Activated CD4-positive, alpha-beta T cell treated with anti-CD3 and anti-CD28 coated beads for 36 hours (primary cell): ENCODE measurements at regions of chr17 and their contacts with region 1.

Region 1: DNA sequence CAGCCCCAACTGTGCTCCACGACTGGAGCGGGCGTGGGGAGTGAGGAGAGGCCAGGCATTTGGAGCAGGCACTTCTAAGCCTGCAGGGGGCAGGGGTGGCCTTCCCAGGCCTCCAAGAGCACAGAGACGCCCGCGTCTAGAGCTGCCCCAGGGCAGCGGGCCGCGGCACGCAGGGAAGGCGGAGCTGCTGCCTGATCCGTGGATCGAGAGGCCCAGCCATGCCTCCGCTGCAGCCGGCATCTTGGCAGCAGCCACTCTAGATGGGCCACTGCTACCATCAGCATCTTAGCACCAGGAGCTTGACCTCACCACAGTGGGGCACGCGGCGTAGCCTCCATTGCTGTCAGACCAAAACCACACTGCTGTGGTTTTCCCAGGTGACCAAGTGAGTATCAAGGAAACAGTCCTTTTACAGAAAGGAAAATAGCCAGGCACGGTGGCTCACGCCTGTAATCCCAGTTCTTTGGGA is 20.4 kb upstream of the WDR45B start:
- DNase-seq: peak; percentile 75
- ATAC-seq: peak; percentile 99
- H3K4me3 Mint-ChIP-seq: no peak overlapping the region
- H3K27ac Mint-ChIP-seq: no peak overlapping the region
- H3K4me1 Mint-ChIP-seq: peaks cover 2% of the 10 kb centered on the region
- H3K27me3 Mint-ChIP-seq: no peaks in the 10 kb centered on the region

Region 2: GRCh38 chr17:82611140-82612058 is 57.3 kb before region 1 on chr17:
- CTCF ChIA-PET with region 1: no interaction called
- POLR2A ChIA-PET with region 1: no interaction called
- intact Hi-C with region 1: loop called in 1 of 2 experiments (anchors 5 kb)
- DNase-seq: no peak
- ATAC-seq: peak; percentile 23
- H3K4me3 Mint-ChIP-seq: no peak overlapping the region
- H3K27ac Mint-ChIP-seq: no peak overlapping the region
- H3K4me1 Mint-ChIP-seq: no peaks in the 10 kb centered on the region
- H3K27me3 Mint-ChIP-seq: no peaks in the 10 kb centered on the region

Region 3: GRCh38 chr17:82729479-82730260 is 61.0 kb after region 1 on chr17:
- CTCF ChIA-PET with region 1: no interaction called
- POLR2A ChIA-PET with region 1: no interaction called
- intact Hi-C with region 1: no loop called
- DNase-seq: no peak
- ATAC-seq: no peak
- H3K4me3 Mint-ChIP-seq: no peak overlapping the region
- H3K27ac Mint-ChIP-seq: no peak overlapping the region
- H3K4me1 Mint-ChIP-seq: no peaks in the 10 kb centered on the region
- H3K27me3 Mint-ChIP-seq: no peaks in the 10 kb centered on the region

Region 4: GRCh38 chr17:82767041-82767754 is 98.5 kb after region 1 on chr17:
- CTCF ChIA-PET with region 1: interaction called, 12 read pairs
- POLR2A ChIA-PET with region 1: interaction called, 3 read pairs
- intact Hi-C with region 1: loop called (anchors 1 to 5 kb)
- DNase-seq: peak; percentile 78
- ATAC-seq: peak; percentile 61
- H3K4me3 Mint-ChIP-seq: no peak overlapping the region
- H3K27ac Mint-ChIP-seq: no peak overlapping the region
- H3K4me1 Mint-ChIP-seq: peaks cover 7% of the 10 kb centered on the region
- H3K27me3 Mint-ChIP-seq: no peaks in the 10 kb centered on the region

Region 5: DNA sequence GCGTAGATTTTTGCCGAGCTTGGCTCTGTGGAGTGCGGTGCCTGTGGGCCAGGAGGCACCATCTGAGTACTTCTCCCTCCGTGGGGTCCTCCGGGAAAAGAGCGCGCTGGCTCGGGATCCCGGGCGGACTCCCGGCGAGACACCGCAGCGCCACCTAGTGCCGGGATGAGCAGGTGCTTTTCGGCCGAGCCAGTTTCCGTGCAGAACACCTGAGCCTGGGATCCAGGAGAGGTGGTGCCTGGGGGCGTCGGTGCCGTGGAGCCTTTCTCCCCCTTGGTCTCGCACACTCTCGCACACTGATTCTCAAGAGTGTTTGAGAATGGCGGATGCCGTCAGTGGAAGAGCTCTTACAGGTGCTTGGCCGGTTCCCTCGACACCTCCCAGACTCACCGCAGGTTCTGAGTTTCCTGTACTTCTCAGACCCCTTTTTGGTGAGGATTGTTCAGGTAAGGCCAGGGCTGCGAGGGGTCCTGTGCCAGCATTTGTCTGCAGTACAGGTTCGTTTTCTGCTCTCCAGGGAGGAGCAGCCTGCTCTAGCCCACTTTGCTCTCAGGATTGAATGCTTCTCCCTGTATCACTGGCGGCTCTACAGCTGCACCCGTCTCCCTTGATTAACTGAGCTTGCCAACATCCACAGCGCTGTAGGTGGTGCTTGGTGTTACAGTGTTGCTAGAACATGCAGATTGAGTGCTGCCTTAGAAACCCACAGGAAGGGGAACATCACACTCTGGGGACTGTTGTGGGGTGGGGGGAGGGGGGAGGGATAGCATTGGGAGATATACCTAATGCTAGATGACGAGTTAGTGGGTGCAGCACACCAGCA is 106.5 kb after region 1 on chr17:
- CTCF ChIA-PET with region 1: interaction called, 7 read pairs
- POLR2A ChIA-PET with region 1: interaction called, 3 read pairs
- intact Hi-C with region 1: loop called in 1 of 2 experiments (anchors 2 kb)
- DNase-seq: peak; percentile 74
- ATAC-seq: no peak
- H3K4me3 Mint-ChIP-seq: no peak overlapping the region
- H3K27ac Mint-ChIP-seq: no peak overlapping the region
- H3K4me1 Mint-ChIP-seq: peaks cover 2% of the 10 kb centered on the region
- H3K27me3 Mint-ChIP-seq: no peaks in the 10 kb centered on the region

Region 6: GRCh38 chr17:82917691-82918345 is 249.2 kb after region 1 on chr17:
- CTCF ChIA-PET with region 1: interaction called, 3 read pairs
- POLR2A ChIA-PET with region 1: no interaction called
- intact Hi-C with region 1: loop called in 1 of 2 experiments (anchors 10 kb)
- DNase-seq: peak; percentile 65
- ATAC-seq: peak; percentile 44
- H3K4me3 Mint-ChIP-seq: no peak overlapping the region
- H3K27ac Mint-ChIP-seq: no peak overlapping the region
- H3K4me1 Mint-ChIP-seq: peaks cover 10% of the 10 kb centered on the region
- H3K27me3 Mint-ChIP-seq: no peaks in the 10 kb centered on the region